ENCODE measurements at regions of chr2 and their contacts with region 1.

Region 1: GRCh38 chr2:50492477-50492851 is 539.5 kb downstream of the NRXN1 start:
- DNase-seq: peak; percentile 55
- CTCF ChIP-seq: peak; percentile 68

Region 2: GRCh38 chr2:50178050-50178449 is 314.4 kb before region 1 on chr2:
- CTCF ChIA-PET with region 1: no interaction called
- POLR2A ChIA-PET with region 1: no interaction called
- DNase-seq: no peak
- CTCF ChIP-seq: no peak

Region 3: DNA sequence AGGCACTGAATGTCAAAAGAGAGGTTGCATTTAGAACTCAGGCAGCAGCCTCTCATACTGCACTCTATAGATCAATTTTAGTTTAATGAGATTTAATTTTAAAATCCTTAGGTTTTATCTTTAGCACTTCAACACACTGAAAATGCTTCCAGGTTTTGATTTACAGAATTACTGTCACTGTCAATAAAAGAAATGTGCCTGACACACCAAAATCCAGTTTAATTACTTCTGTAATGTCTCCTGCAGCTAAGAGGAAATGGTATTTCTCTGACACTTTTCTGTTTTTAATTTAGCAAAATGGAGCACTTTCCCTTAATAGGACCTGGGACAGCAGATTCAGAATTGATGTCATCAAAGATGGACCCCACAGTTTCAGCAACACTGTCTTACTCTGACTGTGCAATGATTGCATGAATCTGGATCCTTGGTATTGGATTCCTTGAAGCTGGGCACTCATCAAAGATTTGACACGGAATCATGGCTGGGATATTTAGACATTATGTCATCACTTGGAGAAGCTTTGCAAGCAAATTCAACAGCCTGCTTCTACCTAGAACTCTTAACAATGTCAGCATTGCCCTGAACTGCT is 37.0 kb before region 1 on chr2:
- CTCF ChIA-PET with region 1: interaction called, 11 read pairs
- POLR2A ChIA-PET with region 1: no interaction called
- DNase-seq: no peak
- CTCF ChIP-seq: no peak

Region 4: DNA sequence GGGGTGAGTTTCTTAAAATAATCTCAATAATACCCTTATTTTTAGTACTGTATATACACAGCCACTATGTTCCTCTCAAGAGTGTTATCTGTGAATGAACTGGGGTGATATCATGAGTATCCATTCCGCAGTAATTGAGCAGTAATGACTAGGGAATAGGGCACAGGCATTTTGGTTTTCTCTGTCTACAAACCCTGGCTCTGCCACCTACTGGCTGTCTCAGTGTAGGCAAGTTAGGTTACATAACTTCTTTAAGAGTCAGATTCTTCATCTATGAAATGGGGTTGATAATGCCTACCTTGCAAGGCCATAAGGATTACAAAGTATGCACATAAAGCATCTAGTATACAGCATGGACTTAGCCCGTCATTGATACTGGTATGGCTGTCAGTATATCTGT is 16.3 kb before region 1 on chr2:
- CTCF ChIA-PET with region 1: interaction called, 29 read pairs
- POLR2A ChIA-PET with region 1: no interaction called
- DNase-seq: no peak
- CTCF ChIP-seq: no peak

Region 5: DNA sequence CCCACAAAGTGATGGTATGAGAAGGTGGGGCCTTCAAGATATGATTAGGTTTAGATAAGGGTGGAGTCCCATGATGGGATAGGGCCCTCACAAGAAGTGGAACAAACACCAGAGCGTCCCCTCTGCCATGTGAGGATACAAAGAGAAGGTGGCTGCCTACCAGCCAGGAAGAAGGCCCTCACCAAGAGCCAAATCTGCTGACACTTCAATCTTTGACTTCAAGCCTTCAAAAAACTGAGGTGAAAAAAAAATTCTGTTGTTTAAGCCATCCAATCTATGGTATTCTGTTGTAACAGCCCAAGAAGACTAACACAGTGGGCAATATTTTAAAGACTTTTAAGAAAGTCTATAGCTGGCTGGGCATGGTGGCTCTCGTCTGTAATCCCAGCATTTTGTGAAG is 17.4 kb after region 1 on chr2:
- CTCF ChIA-PET with region 1: interaction called, 23 read pairs
- POLR2A ChIA-PET with region 1: no interaction called
- DNase-seq: no peak
- CTCF ChIP-seq: no peak

Measured in GM10248 (cell line).